ENCODE measurements at regions of chr16 and their contacts with region 1.

Region 1: GRCh38 chr16:12067714-12068401 is 91.3 kb downstream of the SNX29 start:
- DNase-seq: peak; percentile 25 to 72
- H3K4me3 ChIP-seq: no peak overlapping the region
- H3K27ac ChIP-seq: no peak overlapping the region
- H3K4me1 ChIP-seq: no peaks in the 10 kb centered on the region
- H3K27me3 ChIP-seq: no peaks in the 10 kb centered on the region
- CTCF ChIP-seq: peak in 2 of 3 experiments; percentile 83 to 91; a peak in 3 of 4 replicates
- EP300 ChIP-seq: no peak
- POLR2A ChIP-seq: no peak
- RAD21 ChIP-seq: peak; percentile 93 to 98

Region 2: GRCh38 chr16:11890231-11890965 is 177.5 kb before region 1 on chr16:
- CTCF ChIA-PET with region 1: no interaction called
- POLR2A ChIA-PET with region 1: no interaction called
- DNase-seq: no peak
- H3K4me3 ChIP-seq: no peak overlapping the region
- H3K27ac ChIP-seq: no peak overlapping the region
- H3K4me1 ChIP-seq: no peaks in the 10 kb centered on the region
- H3K27me3 ChIP-seq: no peaks in the 10 kb centered on the region
- CTCF ChIP-seq: no peak
- EP300 ChIP-seq: no peak
- POLR2A ChIP-seq: no peak
- RAD21 ChIP-seq: no peak

Region 3: DNA sequence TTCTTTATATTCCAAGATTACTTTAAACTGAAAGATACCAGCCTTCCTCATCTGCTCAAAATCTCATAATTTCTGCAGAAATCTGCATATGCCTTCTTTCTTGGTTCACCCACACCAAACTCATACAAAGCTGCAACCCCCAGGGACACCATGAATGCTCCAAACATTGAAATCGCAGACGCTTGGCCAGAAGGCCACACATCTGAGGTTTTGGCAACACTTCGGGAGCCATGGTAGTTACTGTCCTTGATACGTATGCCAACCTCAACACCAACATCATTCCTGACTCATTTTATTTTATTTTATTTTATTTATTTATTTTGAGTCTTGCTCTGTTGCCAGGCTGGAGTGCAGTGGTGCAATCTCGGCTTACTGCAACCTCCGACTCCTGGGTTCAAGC is 164.0 kb before region 1 on chr16:
- CTCF ChIA-PET with region 1: interaction called, 12 read pairs
- POLR2A ChIA-PET with region 1: no interaction called
- DNase-seq: no peak
- H3K4me3 ChIP-seq: no peak overlapping the region
- H3K27ac ChIP-seq: no peak overlapping the region
- H3K4me1 ChIP-seq: no peaks in the 10 kb centered on the region; a peak in 2 of 7 replicates
- H3K27me3 ChIP-seq: no peaks in the 10 kb centered on the region
- CTCF ChIP-seq: no peak
- EP300 ChIP-seq: no peak
- POLR2A ChIP-seq: no peak
- RAD21 ChIP-seq: no peak

Region 4: DNA sequence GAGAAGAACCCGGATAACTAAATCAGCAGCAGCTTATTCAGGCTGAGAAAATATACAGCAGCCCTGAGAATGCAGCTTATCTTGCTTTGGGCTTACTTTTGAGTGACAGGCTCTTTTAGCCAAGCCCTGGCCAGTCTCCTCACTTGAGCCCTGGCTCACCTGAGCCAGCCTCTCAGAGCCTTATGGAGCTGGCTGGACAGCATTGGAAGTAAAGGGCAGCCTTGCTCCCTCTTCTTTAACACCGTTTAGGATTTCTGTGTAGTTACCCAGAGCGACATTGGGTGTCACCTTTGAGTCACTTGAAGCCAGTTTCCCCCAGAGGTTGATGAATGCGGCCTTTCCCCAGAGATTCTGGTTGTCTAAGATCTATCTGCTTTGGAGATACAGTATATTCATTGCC is 118.3 kb before region 1 on chr16:
- CTCF ChIA-PET with region 1: interaction called, 22 read pairs
- POLR2A ChIA-PET with region 1: no interaction called
- DNase-seq: peak in 1 of 2 experiments; percentile 56
- H3K4me3 ChIP-seq: no peak overlapping the region
- H3K27ac ChIP-seq: no peak overlapping the region
- H3K4me1 ChIP-seq: peaks cover 0 to 4% (median 0%) of the 10 kb centered on the region in 4 experiments; a peak in 2 of 7 replicates
- H3K27me3 ChIP-seq: no peaks in the 10 kb centered on the region
- CTCF ChIP-seq: peak in 2 of 3 experiments; percentile 64; a peak in 3 of 4 replicates
- EP300 ChIP-seq: no peak
- POLR2A ChIP-seq: no peak
- RAD21 ChIP-seq: peak; percentile 67 to 74

Region 5: DNA sequence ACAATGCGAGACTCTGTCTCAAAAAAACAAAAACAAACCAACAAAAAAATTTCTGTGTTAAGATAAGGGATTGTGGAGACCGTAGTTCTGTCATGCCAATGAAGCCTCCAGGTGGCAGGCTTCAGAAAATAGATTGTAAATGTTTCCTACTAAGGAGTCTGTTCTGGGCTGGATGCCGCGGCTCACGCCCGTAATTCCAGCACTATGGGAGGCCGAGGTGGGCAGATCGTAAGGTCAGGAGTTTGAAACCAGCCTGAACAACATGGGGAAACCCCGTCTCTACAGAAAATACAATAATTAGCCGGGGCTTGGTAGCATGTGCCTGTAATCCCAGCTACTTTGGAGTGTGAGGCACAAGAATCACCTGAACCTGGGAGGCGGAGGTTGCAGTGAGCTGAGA is 95.7 kb before region 1 on chr16:
- CTCF ChIA-PET with region 1: interaction called, 33 read pairs
- POLR2A ChIA-PET with region 1: interaction called, 3 read pairs
- DNase-seq: no peak
- H3K4me3 ChIP-seq: no peak overlapping the region
- H3K27ac ChIP-seq: no peak overlapping the region
- H3K4me1 ChIP-seq: no peaks in the 10 kb centered on the region
- H3K27me3 ChIP-seq: no peaks in the 10 kb centered on the region
- CTCF ChIP-seq: peak in 2 of 3 experiments; percentile 21 to 40; a peak in 2 of 4 replicates
- EP300 ChIP-seq: no peak
- POLR2A ChIP-seq: no peak
- RAD21 ChIP-seq: peak; percentile 13 to 36; a peak in 2 of 4 replicates

Region 6: GRCh38 chr16:12057266-12057665 is 10.6 kb before region 1 on chr16:
- CTCF ChIA-PET with region 1: interaction called, 22 read pairs
- POLR2A ChIA-PET with region 1: no interaction called
- DNase-seq: no peak
- H3K4me3 ChIP-seq: no peak overlapping the region
- H3K27ac ChIP-seq: no peak overlapping the region
- H3K4me1 ChIP-seq: no peaks in the 10 kb centered on the region
- H3K27me3 ChIP-seq: no peaks in the 10 kb centered on the region
- CTCF ChIP-seq: peak in 1 of 3 experiments; percentile 16; a peak in 1 of 4 replicates
- EP300 ChIP-seq: no peak
- POLR2A ChIP-seq: no peak
- RAD21 ChIP-seq: no peak

Region 7: GRCh38 chr16:12120217-12120981 is 52.5 kb after region 1 on chr16:
- CTCF ChIA-PET with region 1: no interaction called
- POLR2A ChIA-PET with region 1: no interaction called
- DNase-seq: no peak
- H3K4me3 ChIP-seq: no peak overlapping the region
- H3K27ac ChIP-seq: no peak overlapping the region
- H3K4me1 ChIP-seq: no peaks in the 10 kb centered on the region
- H3K27me3 ChIP-seq: no peaks in the 10 kb centered on the region
- CTCF ChIP-seq: peak in 1 of 3 experiments; percentile 0; a peak in 1 of 4 replicates
- EP300 ChIP-seq: no peak
- POLR2A ChIP-seq: no peak
- RAD21 ChIP-seq: no peak

Measured in H1 (cell line).